PC-3 (cell line): ENCODE measurements at regions of chr1 and their contacts with region 1.

Region 1: GRCh38 chr1:162136760-162137159 is 67.3 kb downstream of the NOS1AP start:
- DNase-seq: peak; percentile 91
- ATAC-seq: peak; percentile 89
- H3K4me3 ChIP-seq: no peak overlapping the region
- H3K27ac ChIP-seq: peak overlapping the region; percentile 30
- H3K4me1 ChIP-seq: peaks cover 57% of the 10 kb centered on the region
- H3K27me3 ChIP-seq: no peaks in the 10 kb centered on the region
- CTCF ChIP-seq: no peak

Region 2: GRCh38 chr1:162069328-162070093 is 67.2 kb before region 1 on chr1 and contains the start of gene NOS1AP:
- CTCF ChIA-PET with region 1: no interaction called
- POLR2A ChIA-PET with region 1: no interaction called
- intact Hi-C with region 1: loop called (anchors 2 kb)
- DNase-seq: peak; percentile 88
- ATAC-seq: peak; percentile 94
- H3K4me3 ChIP-seq: peak within 1 kb of the TSS; percentile 86
- H3K27ac ChIP-seq: no peak within 1 kb of the TSS
- H3K4me1 ChIP-seq: peaks cover 19% of the 10 kb centered on the region
- H3K27me3 ChIP-seq: no peaks in the 10 kb centered on the region
- CTCF ChIP-seq: no peak
- total RNA-seq, gene NOS1AP: 1.6 and 2.6 TPM in 2 replicates

Region 3: DNA sequence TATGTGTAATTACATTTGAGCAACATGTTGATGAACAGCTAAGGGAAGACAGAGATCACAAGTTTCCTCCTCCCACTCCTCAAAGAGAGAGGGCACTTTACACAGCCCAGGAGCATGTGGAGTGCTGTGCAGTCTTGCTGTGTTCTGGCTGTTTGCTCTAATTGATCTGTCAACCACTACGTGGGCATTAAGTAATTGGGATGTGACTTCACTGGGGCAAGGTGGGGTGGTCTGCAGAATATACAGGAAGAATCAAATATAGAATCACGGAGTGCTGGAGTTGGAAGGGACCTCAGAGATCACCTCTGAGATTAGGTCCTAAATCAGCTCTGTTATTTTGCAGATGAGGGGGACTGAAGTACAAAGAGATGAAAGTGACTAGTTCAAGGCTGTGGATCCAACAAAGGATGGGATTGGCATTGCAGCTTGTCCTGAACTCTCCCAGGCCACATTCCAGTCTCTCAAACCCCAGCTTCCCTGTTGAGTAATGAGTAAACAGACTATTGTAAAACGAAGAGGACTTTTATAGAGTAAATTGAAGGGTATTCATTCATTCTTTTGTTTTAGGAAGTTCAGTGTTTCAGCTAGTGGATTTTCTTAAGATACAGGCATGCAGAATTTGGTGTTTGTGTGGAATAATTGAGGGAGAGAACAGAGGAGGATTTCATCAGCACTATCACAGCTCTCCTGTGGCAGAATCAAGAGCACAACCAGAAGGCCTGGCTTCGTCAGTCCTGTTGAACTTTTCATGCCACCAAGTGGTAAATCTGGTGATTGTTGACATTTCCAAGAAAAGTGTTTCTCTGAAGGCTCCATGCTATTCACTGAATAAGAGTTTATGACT is 44.9 kb before region 1 on chr1:
- CTCF ChIA-PET with region 1: no interaction called
- POLR2A ChIA-PET with region 1: no interaction called
- intact Hi-C with region 1: loop called (anchors 5 kb)
- DNase-seq: peak; percentile 58
- ATAC-seq: peak; percentile 38
- H3K4me3 ChIP-seq: no peak overlapping the region
- H3K27ac ChIP-seq: no peak overlapping the region
- H3K4me1 ChIP-seq: peaks cover 51% of the 10 kb centered on the region
- H3K27me3 ChIP-seq: no peaks in the 10 kb centered on the region
- CTCF ChIP-seq: no peak

Region 4: GRCh38 chr1:162177126-162177525 is 40.4 kb after region 1 on chr1:
- CTCF ChIA-PET with region 1: no interaction called
- POLR2A ChIA-PET with region 1: no interaction called
- intact Hi-C with region 1: loop called (anchors 2 kb)
- DNase-seq: peak; percentile 52
- ATAC-seq: peak; percentile 45
- H3K4me3 ChIP-seq: no peak overlapping the region
- H3K27ac ChIP-seq: no peak overlapping the region
- H3K4me1 ChIP-seq: peaks cover 25% of the 10 kb centered on the region
- H3K27me3 ChIP-seq: no peaks in the 10 kb centered on the region
- CTCF ChIP-seq: no peak

Region 5: GRCh38 chr1:162213281-162213912 is 76.6 kb after region 1 on chr1:
- CTCF ChIA-PET with region 1: no interaction called
- POLR2A ChIA-PET with region 1: no interaction called
- intact Hi-C with region 1: loop called (anchors 5 kb)
- DNase-seq: peak; percentile 94
- ATAC-seq: peak; percentile 87
- H3K4me3 ChIP-seq: no peak overlapping the region
- H3K27ac ChIP-seq: no peak overlapping the region
- H3K4me1 ChIP-seq: peaks cover 19% of the 10 kb centered on the region
- H3K27me3 ChIP-seq: no peaks in the 10 kb centered on the region
- CTCF ChIP-seq: no peak

Region 6: DNA sequence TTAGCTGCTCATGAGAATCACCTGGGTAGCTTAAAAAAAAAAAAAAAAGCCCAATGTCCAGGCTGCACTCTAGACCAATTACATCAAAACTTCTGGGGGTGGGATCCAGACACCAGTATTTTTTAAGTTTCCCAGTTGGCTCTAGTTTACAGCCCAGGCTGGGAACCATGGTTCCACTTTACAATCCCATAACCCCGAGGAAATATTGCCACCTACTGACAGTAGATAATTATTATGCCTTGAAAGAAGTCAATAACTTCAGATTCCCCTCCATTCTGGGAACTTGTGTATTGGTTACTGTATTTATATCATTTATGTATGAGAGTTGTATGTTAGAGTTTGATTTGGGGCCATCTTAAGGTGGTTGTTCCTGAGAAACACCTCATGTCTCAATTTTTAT is 139.7 kb after region 1 on chr1:
- CTCF ChIA-PET with region 1: no interaction called
- POLR2A ChIA-PET with region 1: no interaction called
- intact Hi-C with region 1: loop called (anchors 1 kb)
- DNase-seq: peak; percentile 84
- ATAC-seq: peak; percentile 68
- H3K4me3 ChIP-seq: no peak overlapping the region
- H3K27ac ChIP-seq: no peak overlapping the region
- H3K4me1 ChIP-seq: no peaks in the 10 kb centered on the region
- H3K27me3 ChIP-seq: no peaks in the 10 kb centered on the region
- CTCF ChIP-seq: peak; percentile 91